Ascending aorta (tissue), 2 donors: ENCODE measurements at regions of chr15 and their contacts with region 1.

Region 1: GRCh38 chr15:72796515-72797337 is 13.2 kb upstream of the ADPGK start:
- DNase-seq: peak in 1 of 2 donors; percentile 66
- H3K4me3 ChIP-seq: peak overlapping the region; percentile 51 to 69
- H3K27ac ChIP-seq: peak overlapping the region in 1 of 2 donors; percentile 7
- H3K4me1 ChIP-seq: peaks cover 0 to 7% of the 10 kb centered on the region in 2 donors
- H3K27me3 ChIP-seq: no peaks in the 10 kb centered on the region
- CTCF ChIP-seq: peak; percentile 39 to 76 (median 52)

Region 2: GRCh38 chr15:72902245-72902918 is 105.7 kb after region 1 on chr15:
- intact Hi-C with region 1: loop called (anchors 5 kb)
- DNase-seq: peak; percentile 14 to 89
- H3K4me3 ChIP-seq: peak overlapping the region in 1 of 2 donors; percentile 29
- H3K27ac ChIP-seq: peak overlapping the region; percentile 62 to 72
- H3K4me1 ChIP-seq: peaks cover 5 to 29% of the 10 kb centered on the region in 2 donors
- H3K27me3 ChIP-seq: no peaks in the 10 kb centered on the region
- CTCF ChIP-seq: no peak

Region 3: GRCh38 chr15:73081321-73081958 is 284.7 kb after region 1 on chr15:
- intact Hi-C with region 1: loop called (anchors 1 kb)
- DNase-seq: no peak
- H3K4me3 ChIP-seq: no peak overlapping the region
- H3K27ac ChIP-seq: no peak overlapping the region
- H3K4me1 ChIP-seq: peaks cover 0 to 26% of the 10 kb centered on the region in 2 donors
- H3K27me3 ChIP-seq: no peaks in the 10 kb centered on the region
- CTCF ChIP-seq: peak; percentile 38 to 81 (median 56)